Right ventricle myocardium inferior (tissue), 1 donor: ENCODE measurements at regions of chr5 and their contacts with region 1.

Region 1: GRCh38 chr5:141040771-141041426 is 10.3 kb upstream of the PCDHB1 start:
- DNase-seq: peak; percentile 90
- ATAC-seq: peak; percentile 84

Region 2: GRCh38 chr5:140672455-140673186 is 368.3 kb before region 1 on chr5:
- intact Hi-C with region 1: no loop called
- DNase-seq: no peak
- ATAC-seq: peak; percentile 24

Region 3: DNA sequence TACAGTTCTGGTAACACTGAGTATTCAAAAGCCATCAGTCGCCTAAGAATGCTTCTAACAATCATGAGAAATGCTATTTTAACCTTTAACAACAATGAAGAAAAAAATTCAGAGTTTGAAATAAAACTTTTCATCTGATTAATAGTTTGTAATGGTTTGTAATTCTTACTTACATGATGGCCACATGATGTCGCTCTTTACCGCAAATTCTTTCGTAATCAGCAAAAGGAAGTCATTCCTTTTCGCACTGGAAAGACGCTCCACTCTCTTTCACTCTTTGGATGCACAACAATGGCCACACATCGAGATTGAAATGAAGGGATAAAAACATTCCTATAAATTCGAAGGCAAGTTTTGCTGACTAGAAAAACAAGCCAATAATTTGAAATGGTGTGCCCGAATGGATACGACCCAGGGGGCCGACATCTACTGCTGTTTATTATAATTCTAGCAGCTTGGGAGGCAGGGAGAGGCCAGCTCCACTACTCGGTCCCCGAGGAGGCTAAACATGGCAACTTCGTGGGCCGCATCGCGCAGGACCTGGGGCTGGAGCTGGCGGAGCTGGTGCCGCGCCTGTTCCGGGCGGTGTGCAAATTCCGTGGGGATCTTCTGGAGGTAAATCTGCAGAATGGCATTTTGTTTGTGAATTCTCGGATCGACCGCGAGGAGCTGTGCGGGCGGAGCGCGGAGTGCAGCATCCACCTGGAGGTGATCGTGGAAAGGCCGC is 206.7 kb before region 1 on chr5 and contains the start of gene PCDHA7:
- intact Hi-C with region 1: loop called (anchors 10 kb)
- DNase-seq: no peak
- ATAC-seq: no peak
- total RNA-seq, gene PCDHA7: not detected

Region 4: DNA sequence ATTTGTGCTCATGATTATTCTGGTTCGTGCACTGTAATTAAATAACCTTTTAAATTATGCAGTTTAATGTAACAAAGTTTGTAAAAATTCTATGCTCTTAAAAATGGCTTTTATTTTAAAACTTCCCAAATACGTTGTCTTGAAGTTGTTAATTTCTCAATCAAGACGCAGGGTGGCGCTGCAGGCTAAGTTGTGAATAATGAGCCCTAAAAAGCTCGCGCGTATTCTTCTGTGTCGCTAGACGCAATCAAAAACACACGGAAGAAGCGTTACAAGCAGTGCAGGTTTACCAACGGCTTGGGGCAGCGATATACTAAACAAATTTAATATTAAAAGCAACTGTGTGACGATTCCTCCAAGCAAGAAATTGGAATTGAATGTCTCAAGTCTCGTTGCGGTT is 80.7 kb after region 1 on chr5 and contains the start of gene PCDHB4:
- intact Hi-C with region 1: no loop called
- DNase-seq: no peak
- ATAC-seq: no peak
- total RNA-seq, gene PCDHB4: 1.5 TPM